Stomach (tissue), 19 donors: ENCODE measurements at regions of chr12 and their contacts with region 1.

Region 1: DNA sequence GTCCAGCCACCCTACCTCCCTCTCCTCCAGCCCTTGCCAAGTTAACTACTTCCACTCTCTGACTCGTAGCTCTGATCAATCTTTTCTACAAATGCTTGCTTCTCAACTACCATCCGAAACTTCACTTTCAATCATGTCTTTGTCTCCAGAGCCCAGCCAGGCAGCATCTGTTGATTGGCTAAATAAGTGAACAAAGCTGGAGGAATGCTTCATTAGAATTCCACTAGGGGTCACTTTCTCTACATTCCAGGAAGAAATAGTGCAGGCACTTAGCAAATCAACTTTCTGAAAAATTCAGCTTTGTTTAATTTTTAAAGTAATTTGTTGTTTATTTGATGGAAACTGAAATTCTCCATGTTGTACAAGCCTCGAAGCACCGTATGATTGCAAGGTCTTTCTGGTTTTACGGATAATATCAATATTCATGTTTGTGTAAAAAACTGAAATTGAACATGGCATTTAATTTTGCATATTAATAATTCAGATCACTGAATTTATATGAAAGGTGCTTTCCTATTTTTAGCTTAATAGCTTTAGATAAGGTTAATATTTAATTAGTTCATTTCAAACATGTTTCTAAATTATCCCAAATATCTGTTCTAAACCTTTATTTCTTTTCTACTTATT is 32.4 kb upstream of the HELB start:
- DNase-seq: peak in 1 of 2 donors; percentile 55
- H3K4me3 ChIP-seq: no peak overlapping the region
- H3K27ac ChIP-seq: no peak overlapping the region
- H3K4me1 ChIP-seq: peaks cover 0 to 8% (median 0%) of the 10 kb centered on the region in 4 donors
- H3K27me3 ChIP-seq: peaks cover 0 to 4% (median 0%) of the 10 kb centered on the region in 3 donors
- CTCF ChIP-seq: peak in 5 of 7 experiments; percentile 19 to 61 (median 38)
- EP300 ChIP-seq: no peak
- POLR2A ChIP-seq: no peak

Region 2: GRCh38 chr12:66417217-66417616 is 147.3 kb after region 1 on chr12:
- intact Hi-C with region 1: loop called (anchors 10 kb)
- DNase-seq: no peak
- H3K4me3 ChIP-seq: no peak overlapping the region
- H3K27ac ChIP-seq: no peak overlapping the region
- H3K4me1 ChIP-seq: no peaks in the 10 kb centered on the region
- H3K27me3 ChIP-seq: no peaks in the 10 kb centered on the region
- CTCF ChIP-seq: no peak
- EP300 ChIP-seq: no peak
- POLR2A ChIP-seq: no peak

Region 3: DNA sequence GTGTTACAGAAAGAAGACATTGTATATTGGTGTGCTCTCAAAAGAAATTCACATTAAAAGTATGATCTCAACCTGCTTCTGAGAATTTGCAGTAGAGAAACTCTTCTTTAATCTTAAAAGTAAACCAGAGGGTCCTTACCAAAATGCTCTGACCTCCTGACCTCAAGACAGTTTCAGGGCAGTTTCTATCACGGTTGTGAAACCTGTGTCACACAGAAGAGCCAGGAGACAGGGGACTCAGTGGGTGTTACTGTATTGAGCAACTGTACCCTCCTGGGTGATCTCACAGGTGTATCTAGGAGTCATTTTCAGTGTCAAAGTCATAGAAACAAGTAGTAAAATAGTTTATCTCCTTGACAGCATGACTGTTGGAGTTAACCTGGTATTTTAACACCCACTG is 231.0 kb after region 1 on chr12:
- intact Hi-C with region 1: no loop called
- DNase-seq: no peak
- H3K4me3 ChIP-seq: no peak overlapping the region
- H3K27ac ChIP-seq: no peak overlapping the region
- H3K4me1 ChIP-seq: no peaks in the 10 kb centered on the region
- H3K27me3 ChIP-seq: no peaks in the 10 kb centered on the region
- CTCF ChIP-seq: no peak
- EP300 ChIP-seq: no peak
- POLR2A ChIP-seq: no peak